ENCODE measurements at regions of chr15 and their contacts with region 1.

Region 1: GRCh38 chr15:35751413-35752133 is 205.6 kb upstream of the DPH6 start:
- DNase-seq: peak; percentile 25 to 80
- ATAC-seq: peak; percentile 55 to 94 (median 87)
- H3K4me3 ChIP-seq: peak overlapping the region in 2 of 10 donors; percentile 8 to 14
- H3K27ac ChIP-seq: no peak overlapping the region
- H3K4me1 ChIP-seq: peaks cover 0 to 12% (median 2%) of the 10 kb centered on the region in 9 donors
- H3K27me3 ChIP-seq: no peaks in the 10 kb centered on the region
- CTCF ChIP-seq: peak; percentile 59 to 88 (median 81)

Region 2: DNA sequence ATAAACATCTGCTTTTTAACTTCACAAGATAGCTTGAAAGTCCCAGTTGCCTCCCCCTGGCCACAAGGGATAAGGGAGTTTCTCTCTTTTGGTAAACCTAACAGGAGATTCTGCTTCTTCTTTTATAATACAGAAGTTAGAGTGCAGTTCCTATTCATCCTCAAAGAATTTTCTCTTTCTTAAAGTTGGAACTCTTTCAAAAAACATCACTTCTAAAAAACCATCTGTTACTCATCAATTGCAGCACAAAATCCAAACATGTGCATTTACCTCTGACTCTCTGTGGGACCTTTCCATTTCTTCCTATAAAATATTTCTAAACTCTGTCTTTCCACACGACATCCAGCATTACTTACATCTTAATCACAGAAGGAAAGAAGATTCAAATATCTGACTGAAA is 210.7 kb before region 1 on chr15:
- intact Hi-C with region 1: loop called in 3 of 10 experiments (anchors 5 to 10 kb)
- DNase-seq: no peak
- ATAC-seq: no peak
- H3K4me3 ChIP-seq: no peak overlapping the region
- H3K27ac ChIP-seq: no peak overlapping the region
- H3K4me1 ChIP-seq: peaks cover 0 to 19% (median 10%) of the 10 kb centered on the region in 9 donors
- H3K27me3 ChIP-seq: no peaks in the 10 kb centered on the region
- CTCF ChIP-seq: no peak

Region 3: DNA sequence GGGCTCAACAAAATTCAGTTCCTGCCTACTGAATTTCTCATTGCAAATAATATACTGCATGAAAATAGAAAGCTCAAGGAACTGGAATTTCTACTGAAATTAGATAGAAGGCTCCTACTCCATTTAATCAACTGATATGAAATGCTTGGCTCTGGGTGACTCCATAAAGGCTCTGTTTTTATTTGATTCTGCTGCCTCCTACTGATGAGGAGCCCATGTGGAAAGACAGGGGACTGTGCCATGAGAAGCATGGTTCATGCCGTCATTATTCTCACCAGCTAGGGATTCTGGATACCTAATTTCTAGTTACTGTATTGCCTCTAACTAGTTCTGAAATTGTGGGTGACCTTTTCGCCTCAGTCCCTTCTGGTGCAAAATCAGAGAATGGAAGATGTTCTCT is 160.6 kb after region 1 on chr15:
- intact Hi-C with region 1: loop called in 2 of 10 experiments (anchors 5 kb)
- DNase-seq: no peak
- ATAC-seq: peak in 5 of 8 donors; percentile 59 to 89 (median 71)
- H3K4me3 ChIP-seq: no peak overlapping the region
- H3K27ac ChIP-seq: no peak overlapping the region
- H3K4me1 ChIP-seq: peaks cover 0 to 14% (median 0%) of the 10 kb centered on the region in 9 donors
- H3K27me3 ChIP-seq: no peaks in the 10 kb centered on the region
- CTCF ChIP-seq: peak; percentile 13 to 56 (median 36)

Region 4: DNA sequence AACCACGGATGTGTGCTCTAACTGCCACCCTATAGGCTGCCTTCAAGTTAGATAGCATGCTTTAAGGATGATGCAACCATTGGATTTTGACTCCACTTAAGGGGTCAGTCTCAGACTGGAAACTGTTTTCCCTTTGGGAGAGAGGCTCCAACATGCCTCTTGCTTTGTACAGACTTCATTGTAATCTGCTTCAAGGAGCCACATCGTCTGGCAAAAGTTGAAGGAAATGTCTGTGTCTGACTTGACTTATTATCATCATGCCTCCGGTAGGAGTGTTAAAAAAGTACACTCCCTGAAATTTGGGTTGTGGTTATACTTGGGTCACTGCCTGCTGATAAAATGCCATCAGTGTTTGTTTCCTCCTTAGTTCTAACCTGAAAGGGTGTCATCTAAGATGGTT is 582.5 kb after region 1 on chr15:
- intact Hi-C with region 1: no loop called
- DNase-seq: no peak
- ATAC-seq: no peak
- H3K4me3 ChIP-seq: no peak overlapping the region
- H3K27ac ChIP-seq: no peak overlapping the region
- H3K4me1 ChIP-seq: peaks cover 0 to 8% (median 0%) of the 10 kb centered on the region in 9 donors
- H3K27me3 ChIP-seq: no peaks in the 10 kb centered on the region
- CTCF ChIP-seq: no peak